Activated CD8-positive, alpha-beta T cell treated with anti-CD3 and anti-CD28 coated beads, Interleukin-2, amount 10 ng/mL, durations not matched to agents 7 days and 5 days (primary cell): ENCODE measurements at regions of chr11 and their contacts with region 1.

Region 1: DNA sequence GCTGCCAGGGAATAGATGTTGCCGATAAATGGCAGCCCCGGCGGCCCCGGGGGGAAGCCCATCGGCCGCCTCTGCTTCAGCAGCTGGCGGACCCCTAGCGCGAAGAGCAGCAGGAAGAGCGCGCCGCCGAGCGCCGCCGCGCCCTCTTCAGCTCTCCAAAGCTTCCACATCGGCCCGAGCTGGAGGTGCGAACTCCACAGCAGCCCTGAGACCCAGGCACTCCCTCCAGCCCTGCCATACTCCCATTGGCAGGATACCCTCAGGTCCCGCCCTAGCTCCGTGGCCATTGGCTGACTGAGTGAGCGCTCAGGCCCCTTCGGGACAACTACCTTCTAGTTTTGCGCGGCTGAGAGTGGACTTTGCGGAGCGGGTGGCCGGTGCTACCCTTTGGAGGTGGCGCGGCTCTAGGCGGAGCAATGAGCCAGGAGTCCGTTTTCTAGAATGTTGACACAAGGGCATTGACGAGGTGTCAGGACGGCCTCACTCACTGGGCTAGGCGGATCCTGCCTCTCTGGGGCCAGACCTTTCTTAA is at the start of gene CYP2R1:
- DNase-seq: peak; percentile 95
- ATAC-seq: peak; percentile 95
- H3K4me3 Mint-ChIP-seq: peak within 1 kb of the TSS; percentile 82
- H3K27ac Mint-ChIP-seq: peak within 1 kb of the TSS; percentile 90
- H3K4me1 Mint-ChIP-seq: peaks cover 55% of the 10 kb centered on the region
- H3K27me3 Mint-ChIP-seq: no peaks in the 10 kb centered on the region
- total RNA-seq, gene CYP2R1: 14.4 to 18.8 TPM

Region 2: GRCh38 chr11:14789879-14790484 is 102.1 kb before region 1 on chr11:
- CTCF ChIA-PET with region 1: interaction called, 12 read pairs
- POLR2A ChIA-PET with region 1: no interaction called
- DNase-seq: no peak
- ATAC-seq: no peak
- H3K4me3 Mint-ChIP-seq: no peak overlapping the region
- H3K27ac Mint-ChIP-seq: no peak overlapping the region
- H3K4me1 Mint-ChIP-seq: peaks cover 13% of the 10 kb centered on the region
- H3K27me3 Mint-ChIP-seq: no peaks in the 10 kb centered on the region